ENCODE measurements at regions of chrX and their contacts with region 1.

Region 1: DNA sequence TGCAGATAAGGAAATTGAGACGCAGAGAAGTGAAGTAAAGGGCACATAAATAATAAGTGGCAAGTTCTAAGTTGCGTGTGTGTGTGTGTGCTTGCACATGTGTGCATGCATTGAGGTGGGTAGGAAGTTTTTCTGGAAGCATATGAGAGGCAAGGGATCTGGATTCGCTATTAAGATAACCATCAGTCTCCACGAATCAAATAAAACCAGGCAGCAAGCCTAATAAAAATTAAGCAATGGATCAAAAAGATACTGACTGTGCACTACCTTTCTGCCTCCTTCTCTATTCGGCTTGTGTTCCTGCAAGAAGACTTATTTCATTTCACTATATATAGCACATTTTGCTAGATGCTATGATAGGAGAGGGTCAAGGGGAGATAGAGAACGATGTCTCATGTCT is 23.8 kb downstream of the SLC16A2 start:
- DNase-seq: no peak
- ATAC-seq: no peak
- H3K4me3 ChIP-seq: no peak overlapping the region
- H3K27ac ChIP-seq: no peak overlapping the region
- H3K4me1 ChIP-seq: no peaks in the 10 kb centered on the region
- H3K27me3 ChIP-seq: no peaks in the 10 kb centered on the region; a peak in 1 of 4 replicates
- CTCF ChIP-seq: no peak
- EP300 ChIP-seq: no peak
- POLR2A ChIP-seq: no peak
- RAD21 ChIP-seq: no peak

Region 2: GRCh38 chrX:74049141-74049540 is 396.0 kb before region 1 on chrX:
- CTCF ChIA-PET with region 1: no interaction called
- POLR2A ChIA-PET with region 1: no interaction called
- RAD21 ChIA-PET with region 1: no interaction called
- SMC1A ChIA-PET with region 1: no interaction called
- in situ Hi-C with region 1: no loop called
- intact Hi-C with region 1: no loop called
- DNase-seq: no peak
- ATAC-seq: no peak
- H3K4me3 ChIP-seq: no peak overlapping the region
- H3K27ac ChIP-seq: no peak overlapping the region
- H3K4me1 ChIP-seq: no peaks in the 10 kb centered on the region
- H3K27me3 ChIP-seq: no peaks in the 10 kb centered on the region
- CTCF ChIP-seq: no peak
- EP300 ChIP-seq: no peak
- POLR2A ChIP-seq: no peak
- RAD21 ChIP-seq: no peak

Region 3: GRCh38 chrX:74395556-74395955 is 49.5 kb before region 1 on chrX:
- CTCF ChIA-PET with region 1: no interaction called
- POLR2A ChIA-PET with region 1: no interaction called
- RAD21 ChIA-PET with region 1: no interaction called
- SMC1A ChIA-PET with region 1: no interaction called
- in situ Hi-C with region 1: no loop called
- intact Hi-C with region 1: loop called (anchors 2 kb)
- DNase-seq: no peak
- ATAC-seq: no peak
- H3K4me3 ChIP-seq: no peak overlapping the region
- H3K27ac ChIP-seq: no peak overlapping the region
- H3K4me1 ChIP-seq: no peaks in the 10 kb centered on the region
- H3K27me3 ChIP-seq: no peaks in the 10 kb centered on the region
- CTCF ChIP-seq: no peak
- EP300 ChIP-seq: no peak
- POLR2A ChIP-seq: no peak
- RAD21 ChIP-seq: no peak

Measured in GM12878 (cell line).